BJ (cell line): ENCODE measurements at regions of chr3 and their contacts with region 1.

Region 1: DNA sequence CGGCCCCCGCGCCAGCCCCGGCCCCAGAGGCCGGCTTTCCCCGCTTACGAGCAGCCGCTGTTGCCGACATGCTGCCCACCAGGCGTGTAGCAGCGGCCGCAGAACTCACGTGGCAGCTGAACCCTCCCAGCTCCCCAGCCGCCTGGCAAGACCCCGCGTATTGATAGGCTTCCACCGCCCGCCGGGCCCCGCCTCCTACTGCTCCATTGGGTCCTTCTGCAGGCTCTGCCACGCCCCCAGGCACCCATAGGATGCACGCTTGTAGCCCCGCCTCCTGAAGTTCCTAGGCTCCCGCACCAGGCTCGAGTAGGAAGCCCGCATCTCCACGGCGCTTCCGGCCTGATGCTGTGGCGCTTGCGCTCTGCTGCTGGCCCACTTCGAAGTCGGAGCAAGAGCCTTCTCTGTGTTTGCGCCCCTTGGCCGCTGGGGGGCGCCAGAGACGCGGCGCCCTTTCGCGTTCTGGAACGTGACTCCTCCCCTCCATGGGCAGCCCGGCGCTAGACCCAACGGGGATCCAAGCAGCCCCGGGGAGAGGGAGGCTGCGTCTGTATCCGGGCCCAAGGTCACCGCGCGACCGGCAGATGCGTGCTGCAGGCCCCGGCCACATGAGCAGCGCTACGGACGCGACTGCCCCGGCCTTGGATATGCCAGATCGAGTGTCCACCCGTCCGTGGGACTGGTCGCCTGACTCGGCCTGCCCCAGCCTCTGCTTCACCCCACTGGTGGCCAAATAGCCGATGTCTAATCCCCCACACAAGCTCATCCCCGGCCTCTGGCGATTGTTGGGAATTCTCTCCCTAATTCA is at the starts of genes PARP3 and RRP9:
- DNase-seq: peak; percentile 100
- H3K4me3 ChIP-seq: peak within 1 kb of the TSS; percentile 63
- H3K27me3 ChIP-seq: no peaks in the 10 kb centered on the region
- CTCF ChIP-seq: peak; percentile 100
- polyA plus RNA-seq, gene PARP3: 24.4 and 33.0 TPM in 2 replicates
- polyA plus RNA-seq, gene RRP9: 16.5 and 23.4 TPM in 2 replicates

Region 2: GRCh38 chr3:51955893-51956770 is 14.1 kb after region 1 on chr3:
- CTCF ChIA-PET with region 1: interaction called, 42 read pairs
- POLR2A ChIA-PET with region 1: interaction called, 3 read pairs
- DNase-seq: no peak
- H3K4me3 ChIP-seq: no peak overlapping the region
- H3K27me3 ChIP-seq: no peaks in the 10 kb centered on the region
- CTCF ChIP-seq: peak; percentile 53

Region 3: DNA sequence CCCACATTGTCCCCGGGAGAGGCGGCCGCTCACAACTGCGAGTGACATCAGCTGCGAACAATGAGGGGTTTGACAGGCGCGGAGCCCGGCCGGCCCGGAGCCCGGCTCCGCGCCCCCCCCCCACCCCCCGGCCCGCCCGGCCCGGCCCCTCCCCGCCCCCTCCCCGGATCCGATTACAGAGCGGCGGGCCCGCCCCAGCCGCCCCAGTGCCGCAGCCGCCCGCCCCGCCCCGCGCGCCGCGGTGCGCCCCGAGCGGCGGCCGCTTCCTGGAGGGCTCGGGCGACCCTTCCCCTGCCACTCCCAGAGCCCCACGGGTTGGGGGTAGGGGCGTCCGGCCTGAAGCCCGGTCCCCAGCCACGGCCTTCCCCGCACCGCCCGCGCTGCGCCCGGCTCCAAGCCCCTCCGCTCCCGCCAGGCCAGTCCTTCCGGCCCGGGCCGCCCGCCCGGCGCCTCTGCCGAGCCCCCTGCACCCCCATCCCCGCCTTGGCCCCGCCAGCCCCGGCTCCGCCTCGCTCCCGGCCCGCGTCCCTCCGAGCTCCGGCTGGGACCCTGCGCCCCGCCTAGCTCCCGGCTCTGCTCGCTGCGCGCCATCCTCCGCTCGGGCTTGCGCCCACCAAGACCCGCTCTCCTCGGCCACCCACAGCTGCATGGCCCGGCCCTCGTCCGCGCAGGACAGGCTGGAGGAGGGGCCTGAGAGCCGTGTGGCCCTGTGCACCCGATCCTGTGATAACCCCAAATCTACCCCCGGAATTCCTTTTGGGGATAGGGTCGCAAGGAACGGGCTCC is 25.6 kb after region 1 on chr3 and contains the start of gene PCBP4:
- CTCF ChIA-PET with region 1: interaction called, 53 read pairs
- POLR2A ChIA-PET with region 1: no interaction called
- DNase-seq: no peak
- H3K4me3 ChIP-seq: peak within 1 kb of the TSS; percentile 45
- H3K27me3 ChIP-seq: no peaks in the 10 kb centered on the region
- CTCF ChIP-seq: no peak
- polyA plus RNA-seq, gene PCBP4: 55.9 and 88.7 TPM in 2 replicates

Region 4: GRCh38 chr3:51974963-51975851 is 33.2 kb after region 1 on chr3 and contains the start of gene ABHD14A:
- CTCF ChIA-PET with region 1: interaction called, 53 read pairs
- POLR2A ChIA-PET with region 1: no interaction called
- DNase-seq: no peak
- H3K4me3 ChIP-seq: peak within 1 kb of the TSS; percentile 52
- H3K27me3 ChIP-seq: no peaks in the 10 kb centered on the region
- CTCF ChIP-seq: no peak
- polyA plus RNA-seq, gene ABHD14A: 10.7 and 16.5 TPM in 2 replicates

Region 5: DNA sequence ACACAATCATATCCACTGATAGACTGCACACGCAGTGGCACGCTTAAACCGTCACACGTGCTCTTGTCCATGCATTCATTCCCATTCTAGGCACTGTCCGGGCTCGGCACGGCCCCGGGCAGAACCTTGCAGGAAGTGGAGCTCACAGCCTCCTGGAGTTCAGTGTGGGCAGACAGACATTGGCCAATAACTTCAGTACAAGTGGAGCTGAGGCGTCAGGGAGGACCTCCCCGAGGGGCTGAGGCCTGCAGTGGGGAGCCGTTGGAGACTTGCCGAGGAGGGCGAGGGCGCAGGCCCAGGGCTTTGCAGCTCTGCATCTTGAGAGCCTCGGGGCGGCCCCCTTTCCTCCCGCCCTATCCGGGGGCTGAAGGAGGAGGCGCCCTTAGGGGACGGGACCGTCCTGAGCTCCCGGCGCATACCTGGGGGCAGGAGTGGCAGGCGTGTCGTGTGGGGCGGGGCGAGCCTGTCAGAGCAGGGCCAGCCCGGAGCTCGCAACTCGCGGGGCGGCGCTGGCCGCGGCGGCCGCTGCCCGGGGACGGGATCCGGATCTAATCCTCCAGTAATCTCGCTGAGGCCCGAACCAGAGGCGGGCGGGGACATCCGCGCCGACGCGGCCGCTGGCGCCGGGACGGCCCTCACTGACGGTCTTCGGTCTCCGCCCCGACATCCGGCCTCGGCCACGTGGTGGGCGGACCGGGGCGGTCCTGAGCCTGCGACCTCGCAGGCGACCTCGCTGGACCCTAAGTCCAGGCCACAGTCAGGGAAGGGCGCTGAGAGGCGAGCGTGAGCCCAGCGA is 41.0 kb after region 1 on chr3 and contains the start of gene ACY1:
- CTCF ChIA-PET with region 1: interaction called, 25 read pairs
- POLR2A ChIA-PET with region 1: interaction called, 3 read pairs
- DNase-seq: peak; percentile 45
- H3K4me3 ChIP-seq: peak within 1 kb of the TSS; percentile 54
- H3K27me3 ChIP-seq: no peaks in the 10 kb centered on the region
- CTCF ChIP-seq: no peak
- polyA plus RNA-seq, gene ACY1: 31.7 and 55.7 TPM in 2 replicates

Region 6: GRCh38 chr3:51995346-51996163 is 53.6 kb after region 1 on chr3 and contains the start of gene RPL29:
- CTCF ChIA-PET with region 1: interaction called, 10 read pairs
- POLR2A ChIA-PET with region 1: interaction called, 6 read pairs
- DNase-seq: peak; percentile 76
- H3K4me3 ChIP-seq: peak within 1 kb of the TSS; percentile 91
- H3K27me3 ChIP-seq: no peaks in the 10 kb centered on the region
- CTCF ChIP-seq: no peak
- polyA plus RNA-seq, gene RPL29: 1,978 and 2,324 TPM in 2 replicates

Region 7: DNA sequence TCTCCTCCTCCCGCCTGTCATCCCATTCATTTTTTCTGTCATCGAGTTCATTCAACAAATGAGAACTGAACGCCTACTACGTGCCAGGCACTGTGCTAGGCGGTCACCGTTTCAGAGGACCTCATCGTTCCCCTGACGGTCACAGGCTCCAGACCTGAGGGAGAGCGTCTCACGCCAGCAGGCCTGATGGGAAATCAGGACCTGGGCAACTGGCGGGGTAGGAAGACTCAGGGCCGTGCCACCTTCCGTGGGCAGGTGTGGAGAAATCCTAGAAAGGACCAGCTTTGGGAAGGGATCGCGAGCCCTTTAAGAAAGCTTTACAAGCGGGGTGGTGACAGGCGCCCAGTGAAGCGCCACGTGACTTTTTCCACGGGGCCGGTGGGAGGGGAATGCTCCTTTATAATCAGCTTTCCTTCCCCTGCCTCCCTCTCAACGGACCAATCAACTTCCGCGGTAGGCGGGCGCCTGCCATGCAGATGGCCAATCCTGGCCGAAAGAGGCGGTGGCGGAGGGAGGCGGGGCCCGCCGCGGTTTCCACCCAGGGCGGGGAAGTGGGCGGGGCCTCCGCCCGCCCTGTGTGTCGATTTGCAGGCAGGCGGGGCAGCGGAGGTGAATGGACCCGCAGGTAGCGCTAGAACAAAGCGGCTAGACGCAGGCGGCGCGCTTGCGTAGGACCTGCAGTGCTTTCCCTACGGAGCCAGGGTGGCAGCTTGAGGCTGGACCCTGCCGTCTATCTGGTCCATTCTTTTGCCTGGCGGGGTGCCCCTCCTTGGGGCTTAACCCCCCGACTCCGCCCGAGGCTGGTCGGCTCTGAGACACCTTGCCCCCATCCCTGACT is 115.2 kb after region 1 on chr3:
- CTCF ChIA-PET with region 1: interaction called, 4 read pairs
- POLR2A ChIA-PET with region 1: interaction called, 23 read pairs
- DNase-seq: peak; percentile 91
- H3K4me3 ChIP-seq: peak overlapping the region; percentile 94
- H3K27me3 ChIP-seq: no peaks in the 10 kb centered on the region
- CTCF ChIP-seq: no peak